ENCODE measurements at regions of chr6 and their contacts with region 1.

Region 1: GRCh38 chr6:108113557-108114519 is 39.3 kb upstream of the OSTM1 start:
- DNase-seq: no peak
- H3K4me3 ChIP-seq: no peak overlapping the region
- CTCF ChIP-seq: no peak
- POLR2A ChIP-seq: no peak

Region 2: DNA sequence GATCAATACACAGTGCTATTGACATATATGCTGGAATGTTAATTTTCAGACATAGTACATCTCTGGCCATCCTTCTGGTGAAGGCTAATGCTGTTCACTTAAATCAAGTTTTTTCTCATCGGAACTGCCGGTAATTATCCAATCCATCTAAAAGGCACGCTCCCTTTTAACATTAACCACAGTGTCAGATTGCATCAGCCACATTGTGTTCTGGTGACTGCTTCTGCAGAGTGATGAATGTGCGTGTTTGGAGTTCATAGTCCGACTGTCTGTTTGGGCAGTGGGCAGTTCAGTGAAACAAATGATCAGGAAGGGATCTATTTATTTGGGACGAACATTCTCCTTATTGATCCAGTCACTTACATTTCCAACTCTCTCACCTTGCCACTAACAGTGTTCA is 574.4 kb before region 1 on chr6:
- intact Hi-C with region 1: no loop called
- DNase-seq: no peak
- H3K4me3 ChIP-seq: no peak overlapping the region
- CTCF ChIP-seq: no peak
- POLR2A ChIP-seq: no peak

Region 3: DNA sequence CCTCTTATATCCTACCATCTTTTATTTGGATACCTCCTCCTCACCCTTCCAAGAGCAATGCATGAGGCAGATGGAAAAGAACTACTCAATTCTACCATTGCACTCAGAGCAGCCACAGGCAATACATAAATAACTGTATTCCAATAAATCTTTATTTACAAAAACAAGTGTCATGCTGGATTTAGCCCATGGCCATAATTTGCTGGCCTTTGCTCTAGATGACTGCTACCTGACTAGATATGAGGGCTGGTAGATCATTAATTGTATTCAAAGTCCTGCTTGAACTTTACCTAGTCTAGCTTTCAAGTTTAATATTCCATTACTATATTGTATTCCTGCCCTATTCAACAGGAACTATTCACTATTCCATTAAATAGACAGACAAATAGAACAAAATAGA is 218.1 kb after region 1 on chr6:
- intact Hi-C with region 1: no loop called
- DNase-seq: no peak
- H3K4me3 ChIP-seq: no peak overlapping the region
- CTCF ChIP-seq: no peak
- POLR2A ChIP-seq: no peak

Region 4: GRCh38 chr6:108464418-108465093 is 350.7 kb after region 1 on chr6:
- intact Hi-C with region 1: no loop called
- DNase-seq: no peak
- H3K4me3 ChIP-seq: no peak overlapping the region
- CTCF ChIP-seq: no peak
- POLR2A ChIP-seq: no peak

Region 5: GRCh38 chr6:108492131-108492766 is 378.4 kb after region 1 on chr6:
- intact Hi-C with region 1: loop called (anchors 10 kb)
- DNase-seq: no peak
- H3K4me3 ChIP-seq: no peak overlapping the region
- CTCF ChIP-seq: no peak
- POLR2A ChIP-seq: no peak

Region 6: GRCh38 chr6:108526739-108527174 is 412.9 kb after region 1 on chr6:
- intact Hi-C with region 1: loop called (anchors 10 kb)
- DNase-seq: no peak
- H3K4me3 ChIP-seq: no peak overlapping the region
- CTCF ChIP-seq: no peak
- POLR2A ChIP-seq: no peak

Measured in lower leg skin (tissue), 4 donors.